GM18951 (cell line): ENCODE measurements at regions of chr13 and their contacts with region 1.

Region 1: DNA sequence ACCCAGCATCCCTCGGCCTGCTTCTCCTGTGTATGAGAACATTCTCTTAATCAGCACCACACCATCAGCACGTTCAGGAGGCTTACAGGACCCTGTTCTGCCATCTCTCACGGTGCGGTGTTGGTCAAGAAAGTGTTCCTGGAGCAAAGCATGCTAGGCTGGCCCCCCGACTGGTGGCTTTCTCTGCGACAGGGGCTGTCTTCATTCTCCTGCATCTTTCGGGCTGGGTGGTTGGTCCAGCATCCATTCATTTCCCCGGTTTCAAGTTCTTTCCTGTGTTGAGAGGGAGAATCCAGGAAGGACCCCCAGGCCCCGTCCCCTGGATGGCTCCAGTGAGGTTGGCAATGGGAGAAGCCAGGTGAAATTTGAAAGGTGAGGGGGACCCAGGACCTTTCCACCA is 55.8 kb downstream of the C1QTNF9 start:
- POLR2A ChIP-seq: no peak

Region 2: DNA sequence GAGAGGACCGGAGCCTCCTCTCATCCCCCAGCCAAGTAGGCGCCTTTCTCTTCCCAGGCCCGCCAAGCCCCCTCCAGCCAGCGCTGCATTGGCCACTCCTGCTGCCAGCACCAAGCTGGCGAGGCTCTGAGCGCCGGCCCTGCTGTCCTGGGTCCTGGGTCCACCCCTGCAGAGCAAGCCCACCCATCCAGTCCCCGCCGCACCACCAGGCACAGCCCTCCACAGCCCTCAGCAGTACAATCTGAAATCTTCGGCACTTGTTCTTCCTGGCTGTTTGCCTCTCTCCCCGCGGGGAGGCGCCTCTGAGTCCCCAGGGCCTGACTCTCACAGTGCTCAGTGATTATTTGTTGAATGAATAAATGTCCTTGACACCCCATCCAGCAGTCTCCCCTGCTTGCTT is 1420.8 kb before region 1 on chr13:
- in situ Hi-C with region 1: loop called (anchors 5 kb)
- POLR2A ChIP-seq: no peak